ENCODE measurements at regions of chr2 and their contacts with region 1.

Region 1: DNA sequence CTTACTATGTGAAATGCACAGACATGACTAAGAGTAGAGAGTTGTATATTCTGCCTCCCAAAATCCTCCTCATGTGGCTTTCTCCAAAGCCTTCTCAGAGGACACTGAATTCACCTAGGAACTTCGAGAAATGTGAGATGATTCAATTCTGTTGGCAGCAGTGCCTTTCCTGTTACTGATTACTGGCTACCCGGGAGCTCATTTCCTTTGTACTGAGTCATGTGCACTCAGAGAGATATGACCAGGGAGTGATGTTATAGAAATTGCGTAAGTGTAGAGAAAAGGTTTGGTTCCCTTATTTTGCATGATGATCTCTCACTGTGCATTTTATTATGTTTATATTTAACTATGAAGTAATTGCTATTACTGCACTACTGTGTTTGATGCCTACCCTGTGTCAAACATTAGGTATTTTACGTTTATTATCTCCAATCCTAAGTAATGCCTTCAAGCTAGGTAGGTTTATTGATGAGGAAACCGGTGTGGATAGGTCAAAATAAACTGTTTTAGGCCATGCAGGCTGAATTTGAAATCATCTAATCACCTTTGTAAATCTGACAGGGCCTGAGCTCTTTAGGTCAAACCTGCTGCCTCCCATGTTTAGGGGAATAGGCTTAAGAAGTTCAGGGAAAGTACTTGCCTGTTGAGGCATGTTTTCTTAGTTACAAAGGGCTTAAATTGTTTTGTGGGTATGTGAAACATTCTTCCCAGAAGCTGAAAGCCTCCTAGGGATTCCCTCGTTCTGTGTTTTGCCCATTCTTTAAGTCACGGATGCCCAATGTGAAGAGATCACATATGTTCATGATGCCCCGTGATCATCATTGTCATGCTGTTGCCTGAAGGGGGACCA is 86.8 kb downstream of the FMNL2 start:
- DNase-seq: no peak
- H3K4me3 Mint-ChIP-seq: no peak overlapping the region
- H3K27ac Mint-ChIP-seq: peak overlapping the region; percentile 23
- H3K4me1 Mint-ChIP-seq: peaks cover 20% of the 10 kb centered on the region
- H3K27me3 Mint-ChIP-seq: no peaks in the 10 kb centered on the region

Region 2: GRCh38 chr2:152383702-152384101 is 38.0 kb before region 1 on chr2:
- intact Hi-C with region 1: no loop called
- DNase-seq: no peak
- H3K4me3 Mint-ChIP-seq: no peak overlapping the region
- H3K27ac Mint-ChIP-seq: no peak overlapping the region
- H3K4me1 Mint-ChIP-seq: no peaks in the 10 kb centered on the region
- H3K27me3 Mint-ChIP-seq: peaks cover 9% of the 10 kb centered on the region

Region 3: DNA sequence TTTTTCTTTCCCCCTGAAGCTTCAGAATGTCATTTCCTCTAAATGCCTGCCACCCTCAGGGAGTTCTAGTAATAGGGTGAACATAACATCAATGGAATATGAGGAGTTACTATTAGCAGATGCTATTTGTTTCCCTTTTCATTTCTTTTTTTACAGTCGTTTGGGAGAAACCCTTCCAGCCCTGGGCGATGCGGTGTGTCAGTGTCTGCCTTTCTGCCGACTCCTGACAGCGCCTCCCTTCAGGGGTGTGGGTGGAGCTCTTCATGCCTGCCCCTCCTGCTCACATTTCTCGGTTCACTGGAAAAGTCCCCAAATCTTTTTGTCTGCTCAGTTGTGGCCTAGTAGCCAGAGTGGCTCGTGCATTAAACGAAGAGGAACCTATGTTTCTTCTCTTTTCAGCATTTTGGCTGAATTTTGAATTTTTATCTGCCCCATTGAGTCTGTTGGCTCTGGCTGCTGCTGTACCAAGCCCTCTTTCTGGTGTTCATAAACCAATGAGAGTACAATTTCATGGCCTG is 14.5 kb before region 1 on chr2:
- intact Hi-C with region 1: loop called (anchors 2 kb)
- DNase-seq: no peak
- H3K4me3 Mint-ChIP-seq: peak overlapping the region; percentile 67
- H3K27ac Mint-ChIP-seq: peak overlapping the region; percentile 84
- H3K4me1 Mint-ChIP-seq: peaks cover 74% of the 10 kb centered on the region
- H3K27me3 Mint-ChIP-seq: no peaks in the 10 kb centered on the region

Measured in activated T-helper 2 cell treated with anti-CD3 and anti-CD28 coated beads, Interferon-gamma antibody, Interleukin-2, Interleukin-4, amounts not matched to agents 10 μg/mL and 5 μg/mL and 100 μg/mL, durations not matched to agents 14 hours and 24 hours and 36 hours (primary cell).